ENCODE measurements at regions of chr18 and their contacts with region 1.

Region 1: GRCh38 chr18:76398896-76399612 is 96.0 kb downstream of the ZNF516 start:
- DNase-seq: peak; percentile 95
- H3K4me3 ChIP-seq: no peak overlapping the region
- H3K27ac ChIP-seq: peak overlapping the region in 1 of 4 donors; percentile 3
- H3K4me1 ChIP-seq: peaks cover 4 to 47% (median 28%) of the 10 kb centered on the region in 4 donors
- H3K27me3 ChIP-seq: no peaks in the 10 kb centered on the region
- CTCF ChIP-seq: peak; percentile 96 to 99 (median 98)
- EP300 ChIP-seq: no peak
- POLR2A ChIP-seq: no peak

Region 2: DNA sequence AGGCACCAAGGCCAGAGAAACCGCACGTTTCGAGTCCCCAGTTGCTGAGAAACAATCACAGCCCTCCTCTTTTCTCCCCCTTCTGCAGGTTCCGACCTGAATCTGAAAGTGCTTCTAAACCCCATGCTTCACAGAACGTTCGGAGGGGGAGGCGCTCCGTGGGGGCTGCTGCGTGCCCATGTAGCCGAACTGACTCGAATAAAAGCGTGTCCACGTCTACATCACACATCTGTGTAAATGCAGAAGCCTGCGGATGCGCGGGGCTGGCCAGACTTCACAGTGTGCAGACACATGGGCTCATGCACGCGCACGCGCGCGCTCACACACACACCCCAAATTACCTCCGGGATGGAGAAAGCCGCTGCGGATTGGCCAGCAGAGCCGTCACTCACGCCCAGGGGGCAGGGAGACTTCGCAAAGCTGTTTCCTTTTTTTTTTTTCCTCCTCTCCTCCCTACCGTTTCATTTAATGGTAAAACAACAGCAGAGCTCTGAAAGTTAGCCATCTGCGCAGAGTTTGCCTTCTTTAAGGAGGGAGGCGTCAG is 93.7 kb after region 1 on chr18:
- intact Hi-C with region 1: loop called (anchors 5 kb)
- DNase-seq: peak; percentile 99
- H3K4me3 ChIP-seq: peak overlapping the region; percentile 71 to 89 (median 83)
- H3K27ac ChIP-seq: peak overlapping the region; percentile 86 to 91 (median 90)
- H3K4me1 ChIP-seq: peaks cover 16 to 56% (median 43%) of the 10 kb centered on the region in 4 donors
- H3K27me3 ChIP-seq: no peaks in the 10 kb centered on the region
- CTCF ChIP-seq: no peak
- EP300 ChIP-seq: no peak
- POLR2A ChIP-seq: no peak

Region 3: GRCh38 chr18:76544511-76545345 is 145.7 kb after region 1 on chr18:
- intact Hi-C with region 1: no loop called
- DNase-seq: no peak
- H3K4me3 ChIP-seq: no peak overlapping the region
- H3K27ac ChIP-seq: no peak overlapping the region
- H3K4me1 ChIP-seq: no peaks in the 10 kb centered on the region
- H3K27me3 ChIP-seq: no peaks in the 10 kb centered on the region
- CTCF ChIP-seq: no peak
- EP300 ChIP-seq: no peak
- POLR2A ChIP-seq: no peak

Region 4: GRCh38 chr18:76620321-76621170 is 221.5 kb after region 1 on chr18:
- intact Hi-C with region 1: loop called (anchors 2 kb)
- DNase-seq: peak; percentile 94
- H3K4me3 ChIP-seq: peak overlapping the region; percentile 45 to 60 (median 53)
- H3K27ac ChIP-seq: peak overlapping the region; percentile 72 to 80 (median 76)
- H3K4me1 ChIP-seq: peaks cover 23 to 35% (median 33%) of the 10 kb centered on the region in 4 donors
- H3K27me3 ChIP-seq: no peaks in the 10 kb centered on the region
- CTCF ChIP-seq: peak; percentile 50 to 78 (median 67)
- EP300 ChIP-seq: no peak
- POLR2A ChIP-seq: no peak

Region 5: DNA sequence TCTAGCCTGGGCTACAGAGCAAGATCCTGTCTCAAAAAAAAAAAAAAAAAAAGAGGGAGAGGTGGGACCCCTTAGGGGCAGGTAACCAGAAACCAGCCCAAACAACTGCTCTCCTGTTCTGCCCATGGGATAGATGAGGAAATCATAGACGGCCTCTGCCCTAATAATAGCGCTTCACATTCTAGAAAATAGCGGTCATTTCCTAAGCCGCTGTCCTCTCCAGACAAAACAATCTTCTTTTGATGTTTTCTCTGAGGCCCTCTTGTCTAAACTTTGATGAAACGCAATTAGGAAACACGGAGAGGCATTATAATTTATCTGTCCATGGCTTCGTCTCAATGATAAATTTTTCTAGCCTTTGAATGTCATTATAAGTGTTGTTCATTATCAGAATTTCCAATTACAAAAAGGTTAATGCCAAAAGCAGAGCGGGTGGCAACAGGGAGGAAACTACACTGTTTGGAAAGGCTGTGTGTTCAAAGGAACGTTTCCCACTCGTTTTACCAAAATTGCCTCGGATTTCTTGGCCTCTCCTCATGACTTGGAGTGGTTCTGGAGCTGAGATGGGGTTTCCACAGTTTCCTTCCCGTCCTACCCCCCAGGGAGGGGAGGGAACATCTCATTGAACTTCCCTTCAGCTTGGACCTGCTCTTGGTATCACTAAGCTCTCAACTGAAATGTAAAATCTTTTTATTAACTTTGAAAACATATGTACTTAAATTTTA is 271.7 kb after region 1 on chr18:
- intact Hi-C with region 1: no loop called
- DNase-seq: no peak
- H3K4me3 ChIP-seq: no peak overlapping the region
- H3K27ac ChIP-seq: no peak overlapping the region
- H3K4me1 ChIP-seq: peaks cover 0 to 5% (median 0%) of the 10 kb centered on the region in 4 donors
- H3K27me3 ChIP-seq: peaks cover 0 to 5% (median 0%) of the 10 kb centered on the region in 4 donors
- CTCF ChIP-seq: no peak
- EP300 ChIP-seq: no peak
- POLR2A ChIP-seq: no peak

Region 6: DNA sequence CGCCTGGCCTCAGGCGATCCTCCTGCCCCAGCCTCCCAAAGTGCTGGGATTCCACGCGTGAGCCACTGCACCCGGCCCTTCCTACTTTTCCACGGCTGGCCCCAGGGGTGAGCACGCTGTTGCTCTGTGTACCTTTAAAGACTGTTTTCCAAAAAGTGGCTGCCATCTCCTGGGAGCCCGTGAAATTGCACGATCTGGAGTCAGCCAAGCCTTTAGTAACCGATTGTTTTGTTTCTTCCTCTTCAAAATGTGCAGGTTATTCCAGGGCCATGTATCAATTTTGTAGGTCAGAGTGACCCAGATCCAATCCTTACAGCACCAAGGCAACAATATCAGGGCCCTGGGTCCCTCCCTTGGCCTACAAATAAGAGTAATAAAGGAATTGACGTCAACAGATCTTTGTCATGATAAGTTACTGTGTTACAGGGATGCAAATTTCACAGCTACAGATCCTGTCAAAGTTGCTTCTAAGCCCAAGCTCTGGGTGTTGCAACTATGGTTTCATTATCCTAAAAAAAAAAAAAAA is 287.7 kb after region 1 on chr18:
- intact Hi-C with region 1: loop called (anchors 1 kb)
- DNase-seq: no peak
- H3K4me3 ChIP-seq: no peak overlapping the region
- H3K27ac ChIP-seq: peak overlapping the region in 2 of 4 donors; percentile 23 to 36
- H3K4me1 ChIP-seq: peaks cover 3 to 13% (median 8%) of the 10 kb centered on the region in 4 donors
- H3K27me3 ChIP-seq: peaks cover 0 to 27% (median 0%) of the 10 kb centered on the region in 4 donors
- CTCF ChIP-seq: peak; percentile 58 to 75 (median 59)
- EP300 ChIP-seq: no peak
- POLR2A ChIP-seq: no peak

Region 7: GRCh38 chr18:76709659-76710645 is 310.9 kb after region 1 on chr18:
- intact Hi-C with region 1: loop called (anchors 2 kb)
- DNase-seq: no peak
- H3K4me3 ChIP-seq: peak overlapping the region in 2 of 4 donors; percentile 30 to 41
- H3K27ac ChIP-seq: no peak overlapping the region
- H3K4me1 ChIP-seq: peaks cover 4 to 7% (median 5%) of the 10 kb centered on the region in 4 donors
- H3K27me3 ChIP-seq: no peaks in the 10 kb centered on the region
- CTCF ChIP-seq: peak; percentile 89 to 93 (median 90)
- EP300 ChIP-seq: no peak
- POLR2A ChIP-seq: no peak